ENCODE measurements at regions of chr9 and their contacts with region 1.

Region 1: GRCh38 chr9:129482521-129483414 is 138.1 kb downstream of the C9orf50 start:
- DNase-seq: peak; percentile 87
- ATAC-seq: peak; percentile 84

Region 2: DNA sequence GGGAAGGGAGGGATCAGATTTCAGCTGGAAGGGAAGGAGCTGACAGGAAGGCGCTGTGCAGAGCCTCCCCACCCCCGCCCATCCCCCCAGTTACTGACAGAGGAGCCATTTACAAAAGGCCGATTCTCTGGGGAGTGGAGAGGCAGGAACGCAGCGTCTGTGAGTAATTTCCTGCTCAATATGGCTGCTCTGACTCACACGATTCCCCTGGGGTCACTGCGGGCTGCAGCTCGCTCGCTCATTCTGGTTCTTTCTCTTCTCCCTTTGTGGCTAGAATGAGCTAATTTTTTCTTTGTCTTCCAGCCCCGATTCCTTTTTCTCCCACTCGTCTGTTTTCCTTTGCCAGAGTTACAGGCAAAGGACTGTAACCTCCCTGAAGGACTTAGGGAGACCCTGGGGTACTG is 342.8 kb before region 1 on chr9:
- intact Hi-C with region 1: loop called in 1 of 2 experiments (anchors 10 kb)
- DNase-seq: peak; percentile 84 to 93
- ATAC-seq: peak; percentile 80

Region 3: GRCh38 chr9:129702589-129703520 is 220.1 kb after region 1 on chr9:
- intact Hi-C with region 1: no loop called
- DNase-seq: peak; percentile 87 to 92
- ATAC-seq: peak; percentile 97